ENCODE measurements at regions of chr17 and their contacts with region 1.

Region 1: DNA sequence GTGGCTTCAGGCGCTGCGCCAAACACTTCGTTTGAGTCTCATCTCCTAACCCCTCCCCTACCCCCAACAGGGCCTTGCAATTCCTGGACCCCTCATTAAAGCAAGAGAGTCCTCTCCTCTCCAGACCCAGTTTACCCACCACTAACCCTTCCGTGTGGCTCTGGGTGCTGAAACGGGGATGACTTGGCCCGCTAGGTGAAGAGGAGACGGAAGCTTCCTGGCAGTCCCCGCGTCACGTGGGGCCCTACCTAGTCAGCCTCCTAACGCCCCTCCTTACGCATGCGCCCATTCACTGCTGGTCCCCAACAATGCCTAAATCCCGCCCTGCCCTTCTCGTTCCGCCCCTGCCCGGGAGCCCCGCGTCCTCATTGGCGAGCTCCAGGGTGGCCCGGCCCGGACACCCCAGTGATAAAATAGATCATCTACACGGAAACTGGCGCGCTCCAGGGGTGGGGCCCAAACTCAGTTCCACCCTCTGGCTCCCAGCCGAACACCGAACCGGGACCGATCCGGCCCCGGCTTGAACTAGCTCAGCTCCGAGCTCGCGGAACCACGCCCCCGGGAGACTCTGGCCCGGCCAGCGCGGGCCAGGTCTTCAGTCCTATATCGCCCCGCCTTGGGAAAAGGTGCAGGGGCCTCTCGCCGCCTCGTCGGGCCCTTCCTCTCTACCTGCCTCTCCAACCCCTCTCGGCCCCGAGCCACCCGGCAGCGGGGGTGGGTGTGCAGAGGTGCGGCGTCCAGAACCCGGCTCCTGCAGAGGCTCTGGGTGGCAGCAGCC is at the start of gene SLC16A13:
- ATAC-seq: peak; percentile 89 to 97 (median 93)
- H3K4me3 ChIP-seq: peak within 1 kb of the TSS; percentile 56 to 80 (median 66)
- H3K27ac ChIP-seq: peak within 1 kb of the TSS; percentile 49 to 75
- H3K4me1 ChIP-seq: peaks cover 7 to 8% of the 10 kb centered on the region in 2 donors
- total RNA-seq, gene SLC16A13: 0.61 to 2.7 (median 1.1) TPM

Region 2: DNA sequence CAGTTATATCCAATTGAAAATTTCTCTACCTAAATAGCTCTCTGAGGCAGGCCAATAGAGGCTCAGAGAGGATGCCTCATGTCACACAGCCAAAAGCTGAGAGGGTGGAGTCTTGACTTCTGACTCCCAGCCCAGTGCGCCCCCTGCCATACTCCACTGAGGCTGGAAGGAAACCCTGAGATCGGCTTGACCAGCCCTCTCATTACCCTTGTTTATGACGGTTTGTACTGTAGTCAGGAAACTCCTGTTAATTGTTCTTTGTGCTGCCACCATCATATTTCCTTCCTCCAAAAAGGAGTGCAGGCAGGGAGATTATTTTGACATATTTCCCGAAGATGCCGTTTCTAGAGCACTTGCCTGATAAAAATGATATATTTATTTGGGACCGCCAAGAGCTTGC is 708.8 kb before region 1 on chr17:
- in situ Hi-C with region 1: no loop called
- ATAC-seq: no peak
- H3K4me3 ChIP-seq: no peak overlapping the region
- H3K27ac ChIP-seq: no peak overlapping the region
- H3K4me1 ChIP-seq: no peaks in the 10 kb centered on the region

Region 3: GRCh38 chr17:6775871-6776405 is 259.8 kb before region 1 on chr17 and contains the start of gene FBXO39:
- in situ Hi-C with region 1: no loop called
- ATAC-seq: peak in 1 of 8 experiments; percentile 60
- H3K4me3 ChIP-seq: no peak within 1 kb of the TSS
- H3K27ac ChIP-seq: no peak within 1 kb of the TSS
- H3K4me1 ChIP-seq: peaks cover 0 to 4% of the 10 kb centered on the region in 2 donors
- total RNA-seq, gene FBXO39: 0.20 to 0.76 (median 0.42) TPM in 3 of 8 experiments, not detected in the others

Region 4: GRCh38 chr17:7136266-7136877 is 100.6 kb after region 1 on chr17:
- in situ Hi-C with region 1: loop called in 3 of 9 experiments (anchors 10 to 25 kb)
- ATAC-seq: peak in 3 of 8 experiments; percentile 23 to 59 (median 29)
- H3K4me3 ChIP-seq: no peak overlapping the region
- H3K27ac ChIP-seq: no peak overlapping the region
- H3K4me1 ChIP-seq: peaks cover 0 to 6% of the 10 kb centered on the region in 2 donors

Region 5: GRCh38 chr17:7173687-7174602 is 138.2 kb after region 1 on chr17:
- in situ Hi-C with region 1: loop called in 1 of 9 experiments (anchors 25 kb)
- ATAC-seq: peak in 3 of 8 experiments; percentile 8 to 20 (median 16)
- H3K4me3 ChIP-seq: no peak overlapping the region
- H3K27ac ChIP-seq: no peak overlapping the region
- H3K4me1 ChIP-seq: peaks cover 4 to 11% of the 10 kb centered on the region in 2 donors

Region 6: GRCh38 chr17:7280519-7281429 is 245.0 kb after region 1 on chr17:
- in situ Hi-C with region 1: loop called in 1 of 9 experiments (anchors 25 kb)
- ATAC-seq: peak; percentile 60 to 80 (median 71)
- H3K4me3 ChIP-seq: peak overlapping the region in 4 of 5 donors; percentile 34 to 44 (median 38)
- H3K27ac ChIP-seq: no peak overlapping the region
- H3K4me1 ChIP-seq: peaks cover 0 to 8% of the 10 kb centered on the region in 2 donors

Region 7: DNA sequence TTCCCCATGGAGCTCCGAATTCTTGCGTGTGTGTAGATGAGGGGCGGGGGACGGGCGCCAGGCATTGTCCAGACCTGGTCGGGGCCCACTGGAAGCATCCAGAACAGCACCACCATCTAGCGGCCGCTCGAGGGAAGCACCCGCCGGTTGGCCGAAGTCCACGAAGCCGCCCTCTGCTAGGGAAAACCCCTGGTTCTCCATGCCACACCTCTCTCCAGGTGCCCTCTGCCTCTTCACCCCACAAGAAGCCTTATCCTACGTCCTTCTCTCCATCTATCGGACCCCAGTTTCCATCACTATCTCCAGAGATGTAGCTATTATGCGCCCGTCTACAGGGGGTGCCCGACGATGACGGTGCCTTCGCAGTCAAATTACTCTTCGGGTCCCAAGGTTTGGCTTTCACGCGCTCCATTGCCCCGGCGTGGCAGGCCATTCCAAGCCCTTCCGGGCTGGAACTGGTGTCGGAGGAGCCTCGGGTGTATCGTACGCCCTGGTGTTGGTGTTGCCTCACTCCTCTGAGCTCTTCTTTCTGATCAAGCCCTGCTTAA is 525.3 kb after region 1 on chr17:
- in situ Hi-C with region 1: loop called in 1 of 9 experiments (anchors 25 kb)
- ATAC-seq: peak; percentile 41 to 77 (median 71)
- H3K4me3 ChIP-seq: peak overlapping the region; percentile 49 to 100 (median 95)
- H3K27ac ChIP-seq: peak overlapping the region; percentile 81 to 89
- H3K4me1 ChIP-seq: peaks cover 21 to 31% of the 10 kb centered on the region in 2 donors